Left ventricle myocardium inferior (tissue), 1 donor: ENCODE measurements at regions of chr16 and their contacts with region 1.

Region 1: GRCh38 chr16:48556913-48557351 is 53.0 kb downstream of the N4BP1 start:
- DNase-seq: no peak
- H3K4me3 ChIP-seq: no peak overlapping the region
- H3K27ac ChIP-seq: peak overlapping the region; percentile 57
- H3K4me1 ChIP-seq: peaks cover 89% of the 10 kb centered on the region
- H3K27me3 ChIP-seq: no peaks in the 10 kb centered on the region
- CTCF ChIP-seq: no peak

Region 2: GRCh38 chr16:48353565-48354163 is 203.3 kb before region 1 on chr16:
- intact Hi-C with region 1: loop called (anchors 10 kb)
- DNase-seq: no peak
- H3K4me3 ChIP-seq: no peak overlapping the region
- H3K27ac ChIP-seq: peak overlapping the region; percentile 2
- H3K4me1 ChIP-seq: peaks cover 24% of the 10 kb centered on the region
- H3K27me3 ChIP-seq: no peaks in the 10 kb centered on the region
- CTCF ChIP-seq: peak; percentile 90

Region 3: DNA sequence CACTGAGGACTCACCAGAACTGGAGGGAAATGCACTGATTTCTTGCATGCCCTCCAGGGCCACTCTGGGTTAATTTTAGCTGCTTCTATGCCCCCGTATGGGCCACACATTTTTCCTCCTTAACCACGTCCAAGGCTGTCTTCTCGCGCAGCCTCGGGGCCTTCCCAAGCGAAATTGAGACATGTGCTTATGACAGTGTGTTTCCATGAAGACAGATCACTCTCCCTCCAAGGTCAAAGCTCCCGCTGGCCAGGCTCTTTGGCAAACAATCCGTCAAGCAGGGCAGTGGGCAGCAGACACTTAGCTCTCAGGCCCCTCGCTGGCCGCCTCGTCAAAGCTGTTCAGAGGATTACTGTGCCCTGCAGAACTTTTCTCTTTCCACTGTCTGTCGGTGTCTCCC is 296.0 kb after region 1 on chr16:
- intact Hi-C with region 1: no loop called
- DNase-seq: no peak
- H3K4me3 ChIP-seq: no peak overlapping the region
- H3K27ac ChIP-seq: no peak overlapping the region
- H3K4me1 ChIP-seq: no peaks in the 10 kb centered on the region
- H3K27me3 ChIP-seq: peaks cover 48% of the 10 kb centered on the region
- CTCF ChIP-seq: no peak

Region 4: DNA sequence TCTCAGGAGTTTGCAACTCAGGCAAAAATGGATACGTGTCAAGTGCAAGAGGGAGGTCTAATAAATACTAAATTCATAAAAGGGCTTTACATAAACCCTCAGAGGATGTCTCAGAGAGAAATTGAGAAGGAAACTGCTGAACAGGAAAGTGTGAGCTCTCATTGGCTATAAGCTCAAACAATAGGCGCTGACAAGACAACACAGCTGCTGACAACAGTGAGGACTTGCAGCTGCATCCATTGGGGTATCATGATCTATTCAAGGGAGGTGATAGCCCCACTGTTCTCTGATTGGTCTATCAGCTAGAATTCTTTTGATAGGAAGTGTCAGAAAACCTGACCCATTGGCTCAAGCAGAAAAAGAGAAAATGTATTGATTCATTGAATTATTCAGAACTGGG is 537.5 kb after region 1 on chr16:
- intact Hi-C with region 1: no loop called
- DNase-seq: no peak
- H3K4me3 ChIP-seq: no peak overlapping the region
- H3K27ac ChIP-seq: no peak overlapping the region
- H3K4me1 ChIP-seq: peaks cover 18% of the 10 kb centered on the region
- H3K27me3 ChIP-seq: no peaks in the 10 kb centered on the region
- CTCF ChIP-seq: no peak